ENCODE measurements at regions of chr12 and their contacts with region 1.

Region 1: DNA sequence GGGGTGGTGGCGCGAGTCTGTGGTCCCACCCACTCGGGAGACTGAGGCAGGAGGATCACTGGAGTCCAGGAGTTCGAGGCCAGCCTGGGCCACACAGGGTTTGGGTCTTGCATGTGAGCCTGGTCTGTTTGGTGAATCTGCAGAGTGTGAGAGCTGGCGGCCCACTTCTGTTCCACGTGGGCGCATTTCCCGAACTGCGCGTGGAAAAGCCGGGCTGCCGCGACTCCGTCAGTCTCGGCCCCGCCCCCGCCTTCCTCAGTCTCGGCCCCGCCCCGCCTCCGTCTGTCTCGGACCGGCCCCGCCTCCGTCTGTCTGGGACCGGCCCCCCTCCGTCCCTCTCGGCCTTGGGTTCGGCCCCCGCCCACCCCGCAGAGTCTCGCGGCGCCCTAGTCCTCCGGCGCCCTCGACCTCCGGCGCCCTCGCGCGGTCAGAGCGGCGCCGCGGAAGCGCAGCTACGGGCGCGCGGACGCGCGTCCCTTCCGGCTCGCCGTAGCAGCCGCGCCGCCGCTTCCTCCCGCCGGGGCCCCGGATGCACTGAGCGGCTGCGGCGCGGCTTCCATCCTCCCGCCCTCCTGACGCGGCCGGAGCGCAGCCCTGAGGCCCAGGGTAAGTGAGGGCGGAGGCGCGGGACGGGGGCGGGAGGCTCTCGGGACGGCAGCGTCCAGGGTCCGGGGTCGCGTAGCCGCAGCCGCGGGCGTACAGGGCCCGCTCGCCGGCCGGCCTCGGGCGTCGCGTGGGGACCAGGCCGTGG is at the start of gene EP400:
- DNase-seq: peak; percentile 98
- H3K4me3 ChIP-seq: peak within 1 kb of the TSS; percentile 61 to 100 (median 96)
- H3K27ac ChIP-seq: peak within 1 kb of the TSS; percentile 85 to 96 (median 88)
- H3K4me1 ChIP-seq: peaks cover 0 to 44% (median 29%) of the 10 kb centered on the region in 4 donors
- H3K27me3 ChIP-seq: no peaks in the 10 kb centered on the region
- CTCF ChIP-seq: peak in 1 of 4 experiments; percentile 48
- EP300 ChIP-seq: no peak
- POLR2A ChIP-seq: no peak
- total RNA-seq, gene EP400: 14.5 to 35.7 (median 18.8) TPM

Region 2: DNA sequence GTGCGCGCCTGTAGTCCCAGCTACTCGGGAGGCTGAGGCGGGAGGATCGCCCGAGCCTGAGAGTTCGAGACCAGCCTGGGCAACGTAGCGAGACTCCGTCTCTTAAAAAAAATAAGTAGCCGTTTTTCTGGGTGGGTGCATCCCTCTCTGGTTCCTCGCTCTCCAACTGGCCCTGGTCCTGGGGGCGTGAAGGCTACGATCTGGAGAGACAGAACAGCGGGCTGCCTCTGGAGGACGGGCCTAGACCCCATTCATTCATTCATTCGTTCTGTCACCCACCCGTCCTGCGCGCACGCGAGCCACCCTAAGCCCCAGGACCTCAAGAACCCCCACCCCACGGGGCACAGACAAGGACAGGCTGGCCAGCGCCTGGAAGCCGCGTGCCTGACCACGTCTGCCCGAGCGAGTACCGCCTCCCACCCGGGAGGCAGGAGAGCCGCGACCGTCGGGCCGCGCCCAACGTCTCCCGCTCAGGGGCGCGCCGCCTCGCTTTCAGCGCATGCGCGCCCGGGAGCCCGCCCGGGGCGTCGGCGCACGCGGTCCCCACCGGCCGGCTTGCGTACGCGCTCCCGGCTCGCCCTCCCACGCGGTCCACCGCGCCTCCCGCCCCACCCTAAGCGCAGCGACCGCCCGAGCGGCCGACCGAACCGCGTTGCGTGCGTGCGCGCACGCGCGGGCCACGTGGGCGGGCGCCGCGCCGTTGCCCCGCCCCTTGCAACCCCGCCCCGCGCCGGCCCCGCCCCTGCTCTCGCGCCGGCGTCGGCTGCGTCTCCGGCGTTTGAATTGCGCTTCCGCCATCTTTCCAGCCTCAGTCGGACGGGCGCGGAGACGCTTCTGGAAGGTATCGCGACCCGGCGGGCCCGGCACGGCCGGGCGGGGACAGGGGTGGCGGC is 1078.1 kb before region 1 on chr12 and contains the start of gene RAN:
- intact Hi-C with region 1: loop called (anchors 5 kb)
- DNase-seq: peak; percentile 96
- H3K4me3 ChIP-seq: peak within 1 kb of the TSS; percentile 55 to 99 (median 98)
- H3K27ac ChIP-seq: peak within 1 kb of the TSS; percentile 92 to 97 (median 94)
- H3K4me1 ChIP-seq: peaks cover 2 to 33% (median 26%) of the 10 kb centered on the region in 4 donors
- H3K27me3 ChIP-seq: no peaks in the 10 kb centered on the region
- CTCF ChIP-seq: peak in 1 of 4 experiments; percentile 7
- EP300 ChIP-seq: no peak
- POLR2A ChIP-seq: no peak
- total RNA-seq, gene RAN: 160 to 186 (median 180) TPM

Region 3: GRCh38 chr12:131830335-131830913 is 119.2 kb before region 1 on chr12:
- intact Hi-C with region 1: loop called (anchors 5 kb)
- DNase-seq: peak; percentile 92
- H3K4me3 ChIP-seq: peak overlapping the region; percentile 17 to 60 (median 46)
- H3K27ac ChIP-seq: peak overlapping the region; percentile 63 to 80 (median 74)
- H3K4me1 ChIP-seq: peaks cover 0 to 50% (median 44%) of the 10 kb centered on the region in 4 donors
- H3K27me3 ChIP-seq: peaks cover 21 to 76% (median 67%) of the 10 kb centered on the region in 3 donors
- CTCF ChIP-seq: peak in 2 of 4 experiments; percentile 39 to 44
- EP300 ChIP-seq: no peak
- POLR2A ChIP-seq: no peak

Region 4: GRCh38 chr12:131850856-131851559 is 98.6 kb before region 1 on chr12:
- intact Hi-C with region 1: loop called (anchors 5 kb)
- DNase-seq: no peak
- H3K4me3 ChIP-seq: peak overlapping the region in 2 of 4 donors; percentile 19 to 37
- H3K27ac ChIP-seq: no peak overlapping the region
- H3K4me1 ChIP-seq: peaks cover 0 to 9% (median 1%) of the 10 kb centered on the region in 4 donors
- H3K27me3 ChIP-seq: peaks cover 0 to 34% (median 19%) of the 10 kb centered on the region in 3 donors
- CTCF ChIP-seq: peak; percentile 24 to 65 (median 60)
- EP300 ChIP-seq: no peak
- POLR2A ChIP-seq: no peak

Region 5: GRCh38 chr12:131894313-131894860 is 55.2 kb before region 1 on chr12 and contains the start of gene ULK1:
- intact Hi-C with region 1: loop called (anchors 1 kb)
- DNase-seq: peak; percentile 98
- H3K4me3 ChIP-seq: peak within 1 kb of the TSS; percentile 54 to 92 (median 85)
- H3K27ac ChIP-seq: peak within 1 kb of the TSS; percentile 86 to 100 (median 96)
- H3K4me1 ChIP-seq: peaks cover 0 to 44% (median 30%) of the 10 kb centered on the region in 4 donors
- H3K27me3 ChIP-seq: no peaks in the 10 kb centered on the region
- CTCF ChIP-seq: no peak
- EP300 ChIP-seq: no peak
- POLR2A ChIP-seq: peak; percentile 77 to 79
- total RNA-seq, gene ULK1: 13.2 to 29.1 (median 18.6) TPM

Region 6: GRCh38 chr12:131928711-131929580 is 20.7 kb before region 1 on chr12 and contains the start of gene PUS1:
- intact Hi-C with region 1: loop called (anchors 1 kb)
- DNase-seq: peak; percentile 97
- H3K4me3 ChIP-seq: peak within 1 kb of the TSS; percentile 58 to 93 (median 88)
- H3K27ac ChIP-seq: peak within 1 kb of the TSS; percentile 92 to 94 (median 93)
- H3K4me1 ChIP-seq: peaks cover 0 to 24% (median 16%) of the 10 kb centered on the region in 4 donors
- H3K27me3 ChIP-seq: no peaks in the 10 kb centered on the region
- CTCF ChIP-seq: no peak
- EP300 ChIP-seq: no peak
- POLR2A ChIP-seq: peak; percentile 7 to 37
- total RNA-seq, gene PUS1: 7.6 to 15.6 (median 8.9) TPM

Region 7: GRCh38 chr12:132003846-132004245 is 54.2 kb after region 1 on chr12:
- intact Hi-C with region 1: loop called (anchors 1 kb)
- DNase-seq: no peak
- H3K4me3 ChIP-seq: no peak overlapping the region
- H3K27ac ChIP-seq: no peak overlapping the region
- H3K4me1 ChIP-seq: no peaks in the 10 kb centered on the region
- H3K27me3 ChIP-seq: no peaks in the 10 kb centered on the region
- CTCF ChIP-seq: no peak
- EP300 ChIP-seq: no peak
- POLR2A ChIP-seq: no peak

Measured in sigmoid colon (tissue), 7 donors.